HepG2 (cell line): ENCODE measurements at regions of chr9 and their contacts with region 1.

Region 1: GRCh38 chr9:27726244-27727081 is 153.2 kb upstream of the C9orf72 start:
- DNase-seq: peak; percentile 46
- ATAC-seq: peak; percentile 89
- H3K4me3 ChIP-seq: no peak overlapping the region
- H3K27ac ChIP-seq: no peak overlapping the region
- H3K4me1 ChIP-seq: no peaks in the 10 kb centered on the region
- H3K27me3 ChIP-seq: no peaks in the 10 kb centered on the region
- CTCF ChIP-seq: peak; percentile 85
- EP300 ChIP-seq: no peak
- POLR2A ChIP-seq: no peak
- RAD21 ChIP-seq: peak; percentile 62

Region 2: DNA sequence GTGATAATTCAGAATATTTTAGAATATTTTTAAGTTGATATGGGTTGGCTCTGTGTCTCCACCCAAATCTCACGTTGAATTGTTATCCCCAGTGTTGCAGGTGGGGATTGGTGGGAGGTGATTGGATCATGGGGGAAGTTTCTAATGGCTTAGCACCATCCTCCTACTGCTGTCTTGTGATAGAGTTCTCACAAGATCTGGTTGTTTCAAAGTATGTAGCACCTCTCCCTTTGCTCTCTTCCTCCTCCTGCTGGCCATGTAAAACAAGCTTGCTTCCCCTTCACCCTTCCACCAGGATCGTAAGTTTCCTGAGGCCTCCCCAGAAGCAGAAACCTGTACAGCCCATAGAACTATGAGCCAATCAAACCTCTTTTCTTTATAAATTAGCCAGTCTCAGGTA is 61.4 kb after region 1 on chr9:
- CTCF ChIA-PET with region 1: no interaction called
- POLR2A ChIA-PET with region 1: no interaction called
- in situ Hi-C with region 1: no loop called
- intact Hi-C with region 1: loop called (anchors 1 kb)
- DNase-seq: no peak
- ATAC-seq: no peak
- H3K4me3 ChIP-seq: no peak overlapping the region
- H3K27ac ChIP-seq: no peak overlapping the region
- H3K4me1 ChIP-seq: no peaks in the 10 kb centered on the region
- H3K27me3 ChIP-seq: no peaks in the 10 kb centered on the region
- CTCF ChIP-seq: no peak
- EP300 ChIP-seq: no peak
- POLR2A ChIP-seq: no peak
- RAD21 ChIP-seq: no peak

Region 3: DNA sequence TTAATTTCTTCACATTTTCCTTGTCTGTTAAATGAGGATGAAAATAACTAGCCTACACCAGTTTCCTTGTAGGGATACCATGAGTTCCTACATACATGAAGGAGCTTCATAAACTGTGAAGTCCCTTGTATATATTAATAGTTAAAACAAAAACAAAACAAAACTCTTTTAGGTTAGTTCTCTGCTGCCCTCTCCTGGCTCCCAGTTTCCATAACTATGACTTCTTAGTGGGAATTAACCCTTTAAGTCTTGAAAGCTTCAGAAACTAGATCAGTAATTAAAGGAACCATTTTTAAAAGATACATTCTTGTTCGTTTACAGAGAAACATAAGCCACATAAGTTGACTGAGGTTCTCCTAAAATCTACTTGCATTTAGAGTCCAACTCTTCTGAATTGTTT is 346.8 kb after region 1 on chr9:
- CTCF ChIA-PET with region 1: interaction called, 27 read pairs
- POLR2A ChIA-PET with region 1: no interaction called
- in situ Hi-C with region 1: loop called (anchors 5 kb)
- intact Hi-C with region 1: loop called (anchors 1 kb)
- DNase-seq: peak; percentile 30
- ATAC-seq: peak; percentile 60
- H3K4me3 ChIP-seq: peak overlapping the region in 1 of 3 experiments; percentile 12; a peak in 1 of 6 replicates
- H3K27ac ChIP-seq: no peak overlapping the region
- H3K4me1 ChIP-seq: no peaks in the 10 kb centered on the region
- H3K27me3 ChIP-seq: no peaks in the 10 kb centered on the region
- CTCF ChIP-seq: peak; percentile 53
- EP300 ChIP-seq: no peak
- POLR2A ChIP-seq: no peak
- RAD21 ChIP-seq: peak; percentile 25; the same call in 1 of the 2 replicates

Region 4: GRCh38 chr9:29211580-29212396 is 1485.3 kb after region 1 on chr9:
- CTCF ChIA-PET with region 1: no interaction called
- POLR2A ChIA-PET with region 1: no interaction called
- in situ Hi-C with region 1: no loop called
- intact Hi-C with region 1: loop called (anchors 5 kb)
- DNase-seq: peak; percentile 12
- ATAC-seq: peak; percentile 98
- H3K4me3 ChIP-seq: peak overlapping the region in 1 of 3 experiments; percentile 52; a peak in 2 of 6 replicates
- H3K27ac ChIP-seq: no peak overlapping the region
- H3K4me1 ChIP-seq: peaks cover 5% of the 10 kb centered on the region; the same call in 1 of the 2 replicates
- H3K27me3 ChIP-seq: peaks cover 3 to 41% of the 10 kb centered on the region in 2 experiments
- CTCF ChIP-seq: peak; percentile 74
- EP300 ChIP-seq: no peak
- POLR2A ChIP-seq: no peak
- RAD21 ChIP-seq: peak; percentile 56; the same call in 1 of the 2 replicates